SK-N-SH (cell line): ENCODE measurements at regions of chr15 and their contacts with region 1.

Region 1: GRCh38 chr15:77107531-77108355 is 36.8 kb upstream of the TSPAN3 start:
- DNase-seq: peak; percentile 72
- H3K4me3 ChIP-seq: no peak overlapping the region
- H3K27ac ChIP-seq: peak overlapping the region in 1 of 2 experiments; percentile 22; a peak in 1 of 4 replicates
- H3K4me1 ChIP-seq: peaks cover 0 to 17% of the 10 kb centered on the region in 2 experiments; a peak in 2 of 4 replicates
- H3K27me3 ChIP-seq: no peaks in the 10 kb centered on the region
- CTCF ChIP-seq: peak; percentile 68
- EP300 ChIP-seq: no peak
- RAD21 ChIP-seq: peak; percentile 89

Region 2: GRCh38 chr15:77002954-77003912 is 104.5 kb before region 1 on chr15:
- CTCF ChIA-PET with region 1: no interaction called
- POLR2A ChIA-PET with region 1: no interaction called
- DNase-seq: no peak
- H3K4me3 ChIP-seq: no peak overlapping the region
- H3K27ac ChIP-seq: no peak overlapping the region
- H3K4me1 ChIP-seq: peaks cover 0 to 8% of the 10 kb centered on the region in 2 experiments; a peak in 1 of 4 replicates
- H3K27me3 ChIP-seq: no peaks in the 10 kb centered on the region
- CTCF ChIP-seq: no peak
- EP300 ChIP-seq: no peak
- RAD21 ChIP-seq: no peak

Region 3: DNA sequence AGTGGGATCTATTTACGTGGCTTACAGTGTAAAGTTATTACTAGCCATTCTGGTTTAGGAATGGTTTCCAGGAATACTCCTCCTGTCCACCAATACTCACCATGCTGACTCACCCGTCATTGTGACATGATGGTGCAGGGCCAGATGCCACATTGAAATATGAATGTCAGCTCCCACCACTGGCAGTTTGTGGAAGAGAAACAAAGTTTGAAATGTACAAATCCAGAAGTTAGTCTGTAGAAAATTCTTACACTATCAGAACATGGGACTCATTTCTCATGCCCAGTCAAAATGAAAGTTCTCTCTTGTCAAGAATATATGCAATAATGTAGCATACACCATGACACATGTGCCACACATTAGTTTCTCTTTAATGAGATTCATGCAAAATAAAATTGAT is 22.4 kb before region 1 on chr15:
- CTCF ChIA-PET with region 1: interaction called, 16 read pairs
- POLR2A ChIA-PET with region 1: no interaction called
- DNase-seq: no peak
- H3K4me3 ChIP-seq: no peak overlapping the region
- H3K27ac ChIP-seq: no peak overlapping the region
- H3K4me1 ChIP-seq: no peaks in the 10 kb centered on the region; a peak in 1 of 4 replicates
- H3K27me3 ChIP-seq: no peaks in the 10 kb centered on the region
- CTCF ChIP-seq: no peak
- EP300 ChIP-seq: no peak
- RAD21 ChIP-seq: no peak

Region 4: GRCh38 chr15:77118882-77119321 is 11.2 kb after region 1 on chr15:
- CTCF ChIA-PET with region 1: interaction called, 100 read pairs
- POLR2A ChIA-PET with region 1: no interaction called
- DNase-seq: peak; percentile 55
- H3K4me3 ChIP-seq: no peak overlapping the region
- H3K27ac ChIP-seq: peak overlapping the region in 1 of 2 experiments; percentile 45; a peak in 3 of 4 replicates
- H3K4me1 ChIP-seq: peaks cover 3 to 5% of the 10 kb centered on the region in 2 experiments
- H3K27me3 ChIP-seq: no peaks in the 10 kb centered on the region
- CTCF ChIP-seq: peak; percentile 86
- EP300 ChIP-seq: no peak
- RAD21 ChIP-seq: peak; percentile 94

Region 5: GRCh38 chr15:77160562-77161478 is 53.1 kb after region 1 on chr15:
- CTCF ChIA-PET with region 1: no interaction called
- POLR2A ChIA-PET with region 1: no interaction called
- DNase-seq: no peak
- H3K4me3 ChIP-seq: no peak overlapping the region
- H3K27ac ChIP-seq: no peak overlapping the region
- H3K4me1 ChIP-seq: peaks cover 0 to 2% of the 10 kb centered on the region in 2 experiments; a peak in 1 of 4 replicates
- H3K27me3 ChIP-seq: no peaks in the 10 kb centered on the region
- CTCF ChIP-seq: no peak
- EP300 ChIP-seq: no peak
- RAD21 ChIP-seq: no peak

Region 6: GRCh38 chr15:77295446-77295845 is 187.7 kb after region 1 on chr15:
- CTCF ChIA-PET with region 1: no interaction called
- POLR2A ChIA-PET with region 1: no interaction called
- DNase-seq: no peak
- H3K4me3 ChIP-seq: no peak overlapping the region
- H3K27ac ChIP-seq: peak overlapping the region in 1 of 2 experiments; percentile 43; a peak in 2 of 4 replicates
- H3K4me1 ChIP-seq: peaks cover 0 to 15% of the 10 kb centered on the region in 2 experiments; a peak in 2 of 4 replicates
- H3K27me3 ChIP-seq: no peaks in the 10 kb centered on the region
- CTCF ChIP-seq: no peak
- EP300 ChIP-seq: no peak
- RAD21 ChIP-seq: no peak

Region 7: GRCh38 chr15:77347208-77347607 is 239.5 kb after region 1 on chr15:
- CTCF ChIA-PET with region 1: no interaction called
- POLR2A ChIA-PET with region 1: no interaction called
- DNase-seq: no peak
- H3K4me3 ChIP-seq: no peak overlapping the region
- H3K27ac ChIP-seq: peak overlapping the region in 1 of 2 experiments; percentile 20; a peak in 1 of 4 replicates
- H3K4me1 ChIP-seq: no peaks in the 10 kb centered on the region; a peak in 1 of 4 replicates
- H3K27me3 ChIP-seq: no peaks in the 10 kb centered on the region
- CTCF ChIP-seq: no peak
- EP300 ChIP-seq: no peak
- RAD21 ChIP-seq: no peak